Activated CD8-positive, alpha-beta memory T cell treated with anti-CD3 and anti-CD28 coated beads, Interleukin-2, amount 10 ng/mL, durations not matched to agents 7 days and 5 days (primary cell): ENCODE measurements at regions of chr19 and their contacts with region 1.

Region 1: GRCh38 chr19:13861732-13862531 is 15.0 kb upstream of the NANOS3 start:
- DNase-seq: peak; percentile 94
- ATAC-seq: peak; percentile 92
- H3K4me3 Mint-ChIP-seq: peak overlapping the region; percentile 91
- H3K27ac Mint-ChIP-seq: peak overlapping the region; percentile 92
- H3K4me1 Mint-ChIP-seq: peaks cover 42% of the 10 kb centered on the region
- H3K27me3 Mint-ChIP-seq: peaks cover 20% of the 10 kb centered on the region

Region 2: GRCh38 chr19:13597640-13598039 is 264.3 kb before region 1 on chr19:
- CTCF ChIA-PET with region 1: interaction called, 13 read pairs
- DNase-seq: peak; percentile 73
- ATAC-seq: peak; percentile 88
- H3K4me3 Mint-ChIP-seq: no peak overlapping the region
- H3K27ac Mint-ChIP-seq: no peak overlapping the region
- H3K4me1 Mint-ChIP-seq: peaks cover 4% of the 10 kb centered on the region
- H3K27me3 Mint-ChIP-seq: peaks cover 5% of the 10 kb centered on the region

Region 3: DNA sequence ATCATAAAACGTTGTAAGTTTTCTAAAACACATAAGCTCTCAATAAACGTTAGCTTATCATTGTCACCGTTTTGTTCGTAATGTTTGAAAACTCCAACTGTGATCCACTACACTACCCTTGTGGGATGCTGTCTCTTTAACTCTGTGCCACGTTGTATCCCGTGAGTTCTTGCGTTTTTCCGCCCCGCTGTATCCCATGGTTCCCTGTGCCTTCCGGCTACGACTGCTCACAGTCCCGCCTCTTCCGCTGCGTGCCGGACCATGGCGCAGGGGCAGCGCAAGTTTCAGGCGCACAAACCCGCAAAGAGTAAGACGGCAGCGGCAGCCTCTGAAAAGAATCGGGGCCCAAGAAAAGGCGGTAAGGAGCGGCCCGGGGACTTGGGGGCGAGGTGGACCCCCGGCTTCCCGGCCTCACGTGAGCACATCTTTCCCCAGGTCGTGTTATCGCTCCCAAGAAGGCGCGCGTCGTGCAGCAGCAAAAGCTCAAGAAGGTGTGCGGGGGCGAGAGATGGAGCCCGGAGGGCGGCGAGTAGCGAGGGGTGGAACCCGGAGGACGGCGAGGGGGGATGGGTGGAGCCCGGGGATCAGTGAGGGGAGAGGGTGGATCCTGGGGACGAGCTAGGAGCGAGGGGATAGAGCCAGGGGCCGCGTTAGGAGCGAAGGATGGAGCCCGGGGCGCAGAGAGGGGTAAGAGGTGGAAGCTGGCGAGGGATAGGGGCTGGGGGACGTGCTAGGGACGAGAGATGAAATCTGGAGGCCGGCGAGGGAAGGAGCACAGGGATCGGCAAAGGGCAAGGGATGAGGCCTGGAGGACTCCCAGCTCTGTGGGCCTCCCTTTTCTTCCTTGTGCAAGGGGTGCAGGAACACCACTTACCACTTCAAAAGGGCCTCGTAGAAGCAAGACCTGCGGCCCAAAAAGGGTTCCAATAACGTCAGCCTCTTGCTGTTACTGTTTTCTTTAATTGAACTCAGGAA is 87.4 kb before region 1 on chr19 and contains the start of gene C19orf53:
- CTCF ChIA-PET with region 1: interaction called, 30 read pairs
- DNase-seq: peak; percentile 93
- ATAC-seq: peak; percentile 99
- H3K4me3 Mint-ChIP-seq: peak within 1 kb of the TSS; percentile 95
- H3K27ac Mint-ChIP-seq: peak within 1 kb of the TSS; percentile 84
- H3K4me1 Mint-ChIP-seq: peaks cover 20% of the 10 kb centered on the region
- H3K27me3 Mint-ChIP-seq: no peaks in the 10 kb centered on the region
- total RNA-seq, gene C19orf53: 77.7 to 94.0 TPM

Region 4: DNA sequence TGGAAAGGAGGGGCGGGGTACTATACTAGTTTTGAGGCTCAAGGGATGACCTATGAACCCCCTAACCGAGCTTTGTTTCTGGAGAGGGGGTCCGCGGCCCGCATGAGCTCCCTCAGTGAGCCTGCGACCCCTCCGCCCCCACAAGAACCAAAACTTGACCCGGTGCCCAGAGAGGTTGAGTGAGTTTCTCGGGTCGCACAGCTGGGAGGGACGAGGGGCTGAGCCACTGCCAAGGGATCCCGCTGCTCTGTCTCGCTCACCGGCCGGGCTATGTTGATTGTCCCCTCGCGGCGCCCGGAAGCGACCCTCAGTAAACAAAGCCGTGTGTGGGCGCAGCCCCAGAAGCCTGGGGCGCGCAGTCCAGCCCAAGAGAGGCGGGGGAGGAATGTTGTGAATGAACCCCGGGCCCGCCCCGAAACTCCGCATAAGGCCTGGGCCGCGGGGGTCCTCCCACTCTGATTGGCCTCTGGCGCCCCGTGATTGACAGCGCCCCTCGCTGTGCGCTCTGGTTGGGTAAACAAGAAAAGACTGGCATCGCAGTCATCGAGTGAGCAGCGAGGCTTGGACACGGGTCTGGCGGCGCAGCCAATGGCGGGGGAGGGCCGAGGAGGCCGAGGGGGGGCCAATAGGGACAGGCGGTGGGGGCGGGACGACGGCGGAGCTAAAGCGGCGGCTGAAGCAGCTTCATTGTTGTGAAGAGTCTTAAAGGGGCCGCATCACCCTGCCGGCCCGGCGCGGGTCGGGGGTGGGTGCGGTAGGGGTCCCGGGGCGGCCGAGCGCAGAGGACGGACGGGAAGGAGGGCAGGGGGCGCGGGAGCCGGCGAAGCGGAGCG is 67.0 kb before region 1 on chr19 and contains the start of gene ZSWIM4:
- CTCF ChIA-PET with region 1: interaction called, 244 read pairs
- DNase-seq: peak; percentile 99
- ATAC-seq: peak; percentile 98
- H3K4me3 Mint-ChIP-seq: peak within 1 kb of the TSS; percentile 89
- H3K27ac Mint-ChIP-seq: peak within 1 kb of the TSS; percentile 95
- H3K4me1 Mint-ChIP-seq: peaks cover 25% of the 10 kb centered on the region
- H3K27me3 Mint-ChIP-seq: no peaks in the 10 kb centered on the region
- total RNA-seq, gene ZSWIM4: 8.1 to 8.4 TPM

Region 5: DNA sequence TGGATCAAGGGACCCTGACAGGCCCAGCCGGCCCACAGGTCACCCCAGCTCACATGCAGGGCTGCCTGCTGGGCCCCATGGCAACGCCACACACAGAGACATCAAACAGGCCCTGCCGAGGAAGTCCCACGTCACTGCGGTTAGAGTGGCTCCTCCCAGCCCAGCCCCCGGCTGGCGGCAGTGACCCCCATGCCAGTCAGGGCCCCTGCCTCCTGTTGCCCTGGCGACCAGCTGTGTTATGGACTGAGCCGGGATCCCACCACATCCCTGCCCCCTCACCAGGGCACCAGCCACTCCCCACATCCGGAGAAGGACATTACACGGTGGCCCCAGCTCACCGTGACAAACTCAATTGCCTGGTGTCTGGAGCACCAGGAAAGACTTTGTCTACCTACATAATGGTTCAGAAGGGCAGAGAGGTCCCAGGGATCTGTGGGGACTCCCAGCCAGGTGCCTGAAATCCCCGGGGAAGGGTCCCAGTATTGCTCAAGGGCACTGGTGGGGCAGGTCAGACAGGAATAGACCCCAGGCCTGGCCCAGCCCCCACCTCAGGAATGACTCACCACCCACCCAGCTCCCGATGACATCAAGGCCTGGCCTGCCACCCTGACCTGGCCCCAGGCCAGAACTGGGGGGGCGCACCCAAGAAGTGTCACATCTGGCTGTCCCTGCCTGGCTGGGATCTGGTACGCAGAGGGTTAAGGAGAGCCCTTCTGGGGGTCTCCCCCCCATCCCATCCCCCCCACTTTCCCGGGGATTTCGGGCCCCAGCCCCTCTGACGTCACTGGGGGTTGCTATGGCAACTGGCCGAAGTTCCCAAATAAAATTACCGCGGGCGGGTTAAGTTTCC is 15.2 kb before region 1 on chr19:
- CTCF ChIA-PET with region 1: interaction called, 91 read pairs
- DNase-seq: peak; percentile 98
- ATAC-seq: peak; percentile 61
- H3K4me3 Mint-ChIP-seq: peak overlapping the region; percentile 73
- H3K27ac Mint-ChIP-seq: peak overlapping the region; percentile 95
- H3K4me1 Mint-ChIP-seq: peaks cover 49% of the 10 kb centered on the region
- H3K27me3 Mint-ChIP-seq: no peaks in the 10 kb centered on the region

Region 6: GRCh38 chr19:13880059-13881043 is 18.4 kb after region 1 on chr19:
- CTCF ChIA-PET with region 1: interaction called, 18 read pairs
- DNase-seq: peak; percentile 99
- ATAC-seq: peak; percentile 98
- H3K4me3 Mint-ChIP-seq: peak overlapping the region; percentile 25
- H3K27ac Mint-ChIP-seq: peak overlapping the region; percentile 70
- H3K4me1 Mint-ChIP-seq: peaks cover 37% of the 10 kb centered on the region
- H3K27me3 Mint-ChIP-seq: peaks cover 9% of the 10 kb centered on the region

Region 7: DNA sequence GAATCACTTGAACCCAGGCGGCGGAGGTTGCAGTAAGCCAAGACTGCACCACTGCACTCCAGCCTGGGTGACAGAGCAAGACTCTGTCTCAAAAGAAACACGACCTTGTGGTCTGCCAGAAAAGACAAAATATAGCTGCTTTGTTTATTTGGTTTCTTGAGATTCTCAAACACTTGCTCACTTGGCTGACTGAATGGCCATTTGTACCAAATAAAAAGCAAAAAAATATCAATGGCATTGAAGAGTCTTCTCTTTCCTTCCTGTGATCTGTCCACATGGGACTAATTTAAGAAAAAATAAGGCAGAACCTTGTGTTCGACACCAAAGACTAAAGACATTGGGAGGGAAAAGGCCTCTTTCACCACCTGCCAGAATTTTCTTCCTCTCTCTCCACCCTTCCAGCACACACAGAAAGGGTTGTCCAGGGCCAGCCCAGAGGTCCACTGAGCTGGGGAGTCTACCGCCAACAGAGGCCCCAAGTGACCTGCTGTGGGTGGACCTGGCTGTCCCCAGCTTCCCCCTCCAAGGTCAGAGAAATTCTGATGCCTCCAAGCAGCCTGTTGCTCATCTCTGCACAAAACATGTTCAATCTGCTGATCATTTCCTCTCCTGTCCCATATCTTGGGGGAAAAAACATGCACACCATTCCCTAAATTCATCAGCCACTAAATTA is 38.1 kb after region 1 on chr19:
- CTCF ChIA-PET with region 1: no interaction called
- DNase-seq: no peak
- ATAC-seq: no peak
- H3K4me3 Mint-ChIP-seq: no peak overlapping the region
- H3K27ac Mint-ChIP-seq: peak overlapping the region; percentile 37
- H3K4me1 Mint-ChIP-seq: peaks cover 7% of the 10 kb centered on the region
- H3K27me3 Mint-ChIP-seq: no peaks in the 10 kb centered on the region

Region 8: GRCh38 chr19:13987101-13987890 is 125.4 kb after region 1 on chr19:
- CTCF ChIA-PET with region 1: no interaction called
- DNase-seq: no peak
- ATAC-seq: no peak
- H3K4me3 Mint-ChIP-seq: peak overlapping the region; percentile 29
- H3K27ac Mint-ChIP-seq: peak overlapping the region; percentile 95
- H3K4me1 Mint-ChIP-seq: peaks cover 68% of the 10 kb centered on the region
- H3K27me3 Mint-ChIP-seq: no peaks in the 10 kb centered on the region